Dorsolateral prefrontal cortex (tissue), 120 donors: ENCODE measurements at regions of chrX and their contacts with region 1.

Region 1: DNA sequence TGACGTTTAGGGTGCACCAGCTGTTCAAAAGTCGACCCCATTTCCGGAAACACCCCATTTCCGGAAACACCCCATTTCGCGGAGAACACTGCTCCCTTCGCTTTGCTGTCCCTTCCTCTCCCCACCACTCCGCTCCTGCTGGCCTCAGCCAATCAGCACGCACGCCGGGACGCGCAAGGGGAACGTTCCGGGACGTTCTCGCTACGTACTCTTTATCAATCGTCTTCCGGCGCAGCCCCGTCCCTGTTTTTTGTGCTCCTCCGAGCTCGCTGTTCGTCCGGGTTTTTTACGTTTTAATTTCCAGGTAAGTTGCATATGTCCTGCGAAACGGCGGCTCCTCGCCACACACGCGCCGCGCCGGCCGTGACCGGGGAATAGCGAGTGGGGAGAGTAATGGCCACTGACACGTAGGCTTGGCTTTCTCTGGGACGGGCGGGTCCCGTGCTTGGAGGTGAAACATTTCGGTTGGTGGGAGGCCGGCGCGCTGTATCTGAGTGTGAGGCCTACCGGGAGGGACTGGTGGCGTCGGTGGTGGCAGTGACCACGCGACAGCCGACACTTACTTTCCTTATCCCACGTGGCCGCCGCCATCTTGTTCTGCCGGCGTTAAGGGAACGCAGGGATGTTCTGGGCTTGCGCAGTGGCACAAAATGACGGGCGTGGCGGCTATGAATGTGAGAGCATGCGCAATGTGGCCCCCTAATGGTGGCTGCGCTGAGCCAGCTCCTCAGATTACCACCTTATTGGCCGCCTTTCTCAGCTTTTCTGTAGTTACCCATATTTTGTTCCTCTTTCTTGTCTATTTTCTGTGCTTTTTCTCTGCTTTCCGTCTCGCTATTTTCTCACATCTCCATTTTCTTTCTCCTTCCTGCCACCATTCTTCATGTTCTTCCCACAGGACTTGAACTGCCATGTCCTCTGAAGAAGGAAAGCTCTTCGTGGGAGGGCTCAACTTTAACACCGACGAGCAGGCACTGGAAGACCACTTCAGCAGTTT is at the start of gene RBM3:
- DNase-seq: peak; percentile 82 to 94 (median 90)
- H3K4me3 ChIP-seq: peak within 1 kb of the TSS; percentile 43 to 88 (median 74)
- H3K27ac ChIP-seq: peak within 1 kb of the TSS; percentile 83 to 100 (median 98)
- H3K27me3 ChIP-seq: peaks cover 0 to 26% (median 0%) of the 10 kb centered on the region in 45 donors
- CTCF ChIP-seq: peak in 54 of 56 donors; percentile 15 to 65 (median 51)
- total RNA-seq, gene RBM3: 24.6 to 159 (median 56.4) TPM

Region 2: GRCh38 chrX:47650164-47651042 is 924.2 kb before region 1 on chrX and contains the start of gene ELK1:
- intact Hi-C with region 1: loop called in 1 of 2 experiments (anchors 10 kb)
- DNase-seq: peak; percentile 89 to 98 (median 97)
- H3K4me3 ChIP-seq: peak within 1 kb of the TSS; percentile 33 to 79 (median 65)
- H3K27ac ChIP-seq: peak within 1 kb of the TSS in 54 of 59 donors; percentile 31 to 89 (median 76)
- H3K27me3 ChIP-seq: peaks cover 0 to 55% (median 4%) of the 10 kb centered on the region in 45 donors
- CTCF ChIP-seq: peak in 9 of 56 donors; percentile 4 to 34 (median 17)
- total RNA-seq, gene ELK1: 25.1 to 179 (median 92.3) TPM

Region 3: GRCh38 chrX:48508400-48509244 is 65.9 kb before region 1 on chrX and contains the start of gene PORCN:
- intact Hi-C with region 1: loop called in 1 of 2 experiments (anchors 2 kb)
- DNase-seq: peak; percentile 57 to 86 (median 76)
- H3K4me3 ChIP-seq: peak within 1 kb of the TSS; percentile 42 to 84 (median 69)
- H3K27ac ChIP-seq: peak within 1 kb of the TSS in 46 of 59 donors; percentile 13 to 85 (median 67)
- H3K27me3 ChIP-seq: peaks cover 0 to 51% (median 4%) of the 10 kb centered on the region in 45 donors
- CTCF ChIP-seq: peak in 1 of 56 donors; percentile 11
- total RNA-seq, gene PORCN: 13.7 to 42.8 (median 26.2) TPM

Region 4: DNA sequence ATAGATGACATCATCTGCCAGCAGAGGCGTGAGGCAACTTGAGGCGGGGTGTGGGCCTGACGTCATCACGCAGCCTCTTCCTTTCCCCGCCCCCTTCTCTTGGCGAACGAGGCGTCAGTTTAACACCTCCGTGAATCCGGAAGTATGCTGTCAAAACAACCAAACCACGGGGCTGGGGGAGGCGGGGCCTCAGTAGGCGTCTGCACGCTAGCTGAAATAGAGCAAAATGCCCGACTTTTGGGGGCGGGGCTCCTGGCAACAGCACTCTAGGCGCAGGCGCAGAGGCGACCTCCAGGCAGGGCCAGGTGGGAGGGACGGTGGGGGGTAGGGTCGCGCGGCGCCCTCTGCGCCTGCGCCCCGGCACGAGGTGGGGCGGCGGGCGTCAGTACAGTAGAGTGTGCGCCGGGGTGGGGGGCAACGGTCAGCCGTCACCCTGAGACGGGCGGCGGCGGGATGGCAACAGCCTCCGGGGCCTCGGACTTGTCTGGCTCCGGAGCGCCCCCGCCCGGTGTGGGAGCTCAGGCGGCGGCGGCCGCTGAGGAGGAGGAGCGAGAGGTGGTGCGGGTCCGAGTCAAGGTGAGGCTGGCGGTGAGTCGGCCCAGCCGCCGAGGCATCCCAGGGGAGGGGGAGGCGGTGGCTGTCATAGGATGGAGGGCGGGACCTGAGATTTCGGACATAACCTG is 35.1 kb before region 1 on chrX and contains the start of gene TBC1D25:
- intact Hi-C with region 1: loop called in 1 of 2 experiments (anchors 2 kb)
- DNase-seq: peak; percentile 85 to 97 (median 94)
- H3K4me3 ChIP-seq: peak within 1 kb of the TSS; percentile 34 to 84 (median 69)
- H3K27ac ChIP-seq: peak within 1 kb of the TSS in 58 of 59 donors; percentile 65 to 96 (median 88)
- H3K27me3 ChIP-seq: peaks cover 0 to 26% (median 0%) of the 10 kb centered on the region in 45 donors
- CTCF ChIP-seq: peak in 50 of 56 donors; percentile 13 to 68 (median 50)
- total RNA-seq, gene TBC1D25: 15.0 to 35.0 (median 22.4) TPM